ENCODE measurements at regions of chr11 and their contacts with region 1.

Region 1: DNA sequence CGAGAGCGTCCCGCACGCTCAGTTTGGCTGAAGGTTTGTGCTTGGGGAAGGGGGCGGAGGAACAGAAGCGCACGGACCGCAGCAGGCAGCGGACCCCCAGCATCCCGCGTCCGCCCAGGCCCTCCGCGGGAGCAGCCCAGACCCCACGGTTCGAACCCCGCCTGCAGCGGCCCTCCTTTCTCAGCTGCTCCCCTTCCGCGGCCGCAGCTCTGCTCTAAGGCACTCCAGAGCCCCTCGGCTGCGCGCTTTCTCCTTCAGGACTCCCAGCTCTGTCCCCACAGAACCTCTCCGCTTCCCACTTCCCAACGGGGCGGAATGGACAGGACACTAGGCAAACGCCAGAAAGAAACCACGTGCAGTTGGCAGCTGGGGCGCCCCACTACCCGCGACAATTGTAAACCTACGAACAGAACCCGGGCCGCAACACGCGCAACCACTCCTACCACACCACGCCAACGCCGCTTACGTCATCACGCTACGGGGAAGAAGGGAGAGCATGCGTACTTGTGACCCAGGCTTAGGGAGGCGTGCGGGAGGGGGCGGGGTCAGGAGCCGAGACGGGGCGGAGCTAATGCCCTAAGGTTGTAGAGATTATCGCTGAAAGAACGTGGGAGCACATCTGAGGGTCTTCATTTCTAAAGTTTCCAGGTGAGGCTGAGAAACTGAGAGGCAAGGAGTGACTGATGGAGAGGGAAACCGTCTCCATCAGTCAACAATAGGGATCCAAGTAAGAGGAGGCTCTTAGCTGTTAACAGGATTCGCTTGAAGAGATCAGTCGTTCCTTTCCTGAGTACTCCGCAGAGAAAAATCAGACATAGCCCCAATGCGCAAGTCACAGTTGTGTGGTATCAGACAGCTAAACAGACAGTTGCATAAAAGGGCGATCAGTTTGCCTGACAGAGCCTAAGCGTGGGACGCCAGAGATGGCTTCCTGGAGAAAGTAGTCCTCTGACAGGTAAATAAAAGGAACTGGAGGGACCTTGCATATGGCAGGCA is at the start of gene NARS2:
- DNase-seq: peak; percentile 94 to 99
- H3K4me3 ChIP-seq: peak within 1 kb of the TSS; percentile 84 to 95
- H3K27ac ChIP-seq: peak within 1 kb of the TSS; percentile 83 to 91
- H3K4me1 ChIP-seq: peaks cover 0 to 10% of the 10 kb centered on the region in 2 donors
- H3K27me3 ChIP-seq: no peaks in the 10 kb centered on the region
- CTCF ChIP-seq: no peak
- total RNA-seq, gene NARS2: 7.8 TPM

Region 2: GRCh38 chr11:79092791-79093353 is 518.2 kb after region 1 on chr11:
- intact Hi-C with region 1: loop called (anchors 10 kb)
- DNase-seq: peak in 1 of 2 donors; percentile 84
- H3K4me3 ChIP-seq: no peak overlapping the region
- H3K27ac ChIP-seq: peak overlapping the region; percentile 34 to 66
- H3K4me1 ChIP-seq: peaks cover 0 to 4% of the 10 kb centered on the region in 2 donors
- H3K27me3 ChIP-seq: no peaks in the 10 kb centered on the region
- CTCF ChIP-seq: no peak

Measured in ascending aorta (tissue), 2 donors.